ENCODE measurements at regions of chr5 and their contacts with region 1.

Region 1: GRCh38 chr5:55236800-55237199 is 3.4 kb upstream of the CCNO start:
- DNase-seq: no peak

Region 2: DNA sequence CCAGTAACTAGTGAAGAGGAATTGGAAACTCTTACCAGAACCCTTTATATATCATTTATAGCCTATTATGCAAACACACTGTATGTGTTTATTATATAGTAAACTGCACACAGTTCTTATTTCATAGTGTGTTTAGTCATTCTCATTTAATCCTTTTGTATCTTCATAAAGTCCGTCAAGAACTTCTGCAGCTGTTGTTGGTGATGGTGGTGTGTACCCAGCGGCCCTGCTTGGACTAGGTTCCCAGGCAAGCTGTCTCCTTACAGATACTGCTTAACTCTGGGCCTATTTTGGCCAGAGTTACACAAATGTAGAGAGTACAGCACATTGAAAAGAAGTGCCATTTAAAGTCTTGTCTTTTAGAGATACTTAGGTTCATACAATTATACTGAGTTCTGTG is 1444.5 kb before region 1 on chr5:
- intact Hi-C with region 1: loop called in 1 of 2 experiments (anchors 5 kb)
- DNase-seq: no peak

Region 3: DNA sequence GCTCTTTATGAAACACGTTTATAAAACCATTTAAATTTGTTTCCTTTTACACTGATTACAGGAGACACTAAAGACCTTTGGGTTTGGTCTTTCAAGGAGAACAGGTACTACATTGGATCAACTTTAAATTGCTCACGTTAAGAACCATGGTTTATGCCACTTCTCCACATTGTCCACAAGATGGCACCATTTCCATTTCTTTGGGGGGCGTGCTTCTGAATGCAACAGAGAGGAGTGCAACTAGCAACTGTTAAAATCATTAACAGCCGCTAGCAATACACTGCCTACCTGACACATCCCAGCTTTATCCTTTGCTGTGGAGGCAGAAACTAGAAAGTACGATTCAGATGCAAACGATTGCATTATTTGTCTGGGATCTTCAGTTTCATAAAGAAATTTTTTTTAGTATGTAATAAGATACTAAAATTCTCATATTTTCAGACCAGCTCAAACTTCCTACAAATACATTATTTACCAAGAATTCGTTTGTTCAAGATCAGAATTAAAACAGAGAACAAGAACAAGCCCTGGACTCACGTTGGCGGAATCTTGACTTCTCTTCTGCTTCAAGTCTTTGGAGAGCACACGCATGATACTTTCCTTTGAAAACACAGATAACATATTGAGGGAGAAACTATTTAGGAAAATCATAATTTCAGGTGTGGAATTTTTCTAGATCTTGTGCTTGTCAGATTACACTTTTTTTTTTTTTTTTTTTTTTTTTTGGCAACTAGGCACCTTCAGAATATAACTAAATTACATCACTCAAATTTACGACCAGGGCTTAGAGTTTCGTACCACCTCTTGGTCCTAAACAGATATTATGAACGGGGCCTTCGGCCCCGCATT is 64.5 kb before region 1 on chr5:
- intact Hi-C with region 1: no loop called
- DNase-seq: no peak